Activated CD8-positive, alpha-beta T cell treated with anti-CD3 and anti-CD28 coated beads for 36 hours (primary cell): ENCODE measurements at regions of chr19 and their contacts with region 1.

Region 1: GRCh38 chr19:55258828-55259539 is at the start of gene PPP6R1:
- DNase-seq: peak; percentile 96
- ATAC-seq: peak; percentile 79
- H3K4me3 Mint-ChIP-seq: peak within 1 kb of the TSS; percentile 96
- H3K27ac Mint-ChIP-seq: peak within 1 kb of the TSS; percentile 99
- H3K4me1 Mint-ChIP-seq: peaks cover 10% of the 10 kb centered on the region
- H3K27me3 Mint-ChIP-seq: no peaks in the 10 kb centered on the region
- CTCF ChIP-seq: no peak
- total RNA-seq, gene PPP6R1: 197 to 207 TPM

Region 2: DNA sequence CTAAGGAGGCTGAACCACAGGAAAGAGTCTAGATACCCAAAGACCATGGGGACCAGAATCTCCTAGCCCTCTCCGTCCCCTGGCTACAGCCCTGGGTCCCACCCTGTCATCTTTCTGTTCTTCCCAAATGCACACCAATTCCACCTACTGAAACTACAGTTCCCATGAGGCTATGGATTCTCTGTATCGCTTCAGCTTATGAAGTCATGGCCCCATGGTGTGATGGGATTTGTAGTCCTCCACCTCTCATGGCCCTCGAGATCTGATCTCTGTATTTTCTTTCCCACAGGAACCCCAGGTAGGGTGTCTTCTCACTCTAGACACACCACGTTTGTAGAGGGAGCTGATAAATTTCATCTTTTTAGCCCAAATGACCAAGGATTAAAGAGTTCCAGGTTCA is 61.5 kb before region 1 on chr19:
- CTCF ChIA-PET with region 1: no interaction called
- POLR2A ChIA-PET with region 1: no interaction called
- intact Hi-C with region 1: no loop called
- DNase-seq: no peak
- ATAC-seq: peak; percentile 70
- H3K4me3 Mint-ChIP-seq: no peak overlapping the region
- H3K27ac Mint-ChIP-seq: no peak overlapping the region
- H3K4me1 Mint-ChIP-seq: no peaks in the 10 kb centered on the region
- H3K27me3 Mint-ChIP-seq: peaks cover 9% of the 10 kb centered on the region
- CTCF ChIP-seq: no peak

Region 3: GRCh38 chr19:55279770-55280643 is 21.0 kb after region 1 on chr19 and contains the start of gene HSPBP1:
- CTCF ChIA-PET with region 1: interaction called, 4 read pairs
- POLR2A ChIA-PET with region 1: interaction called, 54 read pairs
- intact Hi-C with region 1: no loop called
- DNase-seq: peak; percentile 98
- ATAC-seq: peak; percentile 95
- H3K4me3 Mint-ChIP-seq: peak within 1 kb of the TSS; percentile 92
- H3K27ac Mint-ChIP-seq: peak within 1 kb of the TSS; percentile 97
- H3K4me1 Mint-ChIP-seq: peaks cover 29% of the 10 kb centered on the region
- H3K27me3 Mint-ChIP-seq: no peaks in the 10 kb centered on the region
- CTCF ChIP-seq: no peak
- total RNA-seq, gene HSPBP1: 46.4 to 47.1 TPM

Region 4: DNA sequence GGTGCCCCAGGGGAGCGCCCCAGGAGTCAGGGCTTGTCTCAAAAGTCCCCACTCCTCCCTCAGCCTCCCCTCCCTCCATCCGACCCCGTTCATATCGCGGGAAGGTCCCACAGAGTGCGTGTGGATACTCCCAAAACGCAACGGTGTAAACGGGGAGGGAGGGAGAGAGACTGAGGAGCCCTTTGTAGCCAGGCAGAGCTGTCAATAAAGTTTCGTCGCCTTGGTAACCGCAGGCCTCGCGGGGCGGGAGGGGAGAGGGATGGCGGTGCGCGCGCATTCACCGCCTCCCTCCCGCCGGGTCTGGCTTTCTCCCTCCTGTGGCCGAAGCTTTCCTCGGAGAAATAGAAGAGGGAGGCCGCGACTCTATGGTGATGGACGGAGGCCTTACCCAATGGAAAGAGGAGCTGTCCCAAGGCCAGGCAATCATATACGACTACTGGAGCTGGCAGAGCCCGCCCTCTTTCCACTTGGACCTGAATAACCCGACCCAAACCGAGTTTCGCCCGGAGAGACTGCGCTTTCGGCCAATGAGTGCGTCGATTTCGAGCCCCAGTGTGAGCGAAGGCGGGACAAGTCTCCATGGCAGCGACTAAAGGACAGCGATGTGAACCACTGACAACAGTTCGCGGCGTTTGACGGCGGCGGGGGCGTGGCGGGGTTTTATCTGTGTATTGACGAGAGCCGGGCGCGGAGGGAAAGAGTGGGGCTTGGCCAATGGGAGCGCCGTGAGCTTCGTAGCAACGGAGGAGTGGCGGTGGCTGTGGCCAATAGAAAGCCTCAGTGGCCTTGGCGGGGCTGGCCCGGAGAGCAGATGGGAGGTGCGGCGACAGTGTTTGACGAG is 80.3 kb after region 1 on chr19 and contains the start of gene KMT5C:
- CTCF ChIA-PET with region 1: interaction called, 5 read pairs
- POLR2A ChIA-PET with region 1: interaction called, 10 read pairs
- intact Hi-C with region 1: no loop called
- DNase-seq: peak; percentile 100
- ATAC-seq: peak; percentile 84
- H3K4me3 Mint-ChIP-seq: peak within 1 kb of the TSS; percentile 90
- H3K27ac Mint-ChIP-seq: peak within 1 kb of the TSS; percentile 98
- H3K4me1 Mint-ChIP-seq: peaks cover 12% of the 10 kb centered on the region
- H3K27me3 Mint-ChIP-seq: peaks cover 4% of the 10 kb centered on the region
- CTCF ChIP-seq: no peak
- total RNA-seq, gene KMT5C: 32.6 to 33.1 TPM

Region 5: DNA sequence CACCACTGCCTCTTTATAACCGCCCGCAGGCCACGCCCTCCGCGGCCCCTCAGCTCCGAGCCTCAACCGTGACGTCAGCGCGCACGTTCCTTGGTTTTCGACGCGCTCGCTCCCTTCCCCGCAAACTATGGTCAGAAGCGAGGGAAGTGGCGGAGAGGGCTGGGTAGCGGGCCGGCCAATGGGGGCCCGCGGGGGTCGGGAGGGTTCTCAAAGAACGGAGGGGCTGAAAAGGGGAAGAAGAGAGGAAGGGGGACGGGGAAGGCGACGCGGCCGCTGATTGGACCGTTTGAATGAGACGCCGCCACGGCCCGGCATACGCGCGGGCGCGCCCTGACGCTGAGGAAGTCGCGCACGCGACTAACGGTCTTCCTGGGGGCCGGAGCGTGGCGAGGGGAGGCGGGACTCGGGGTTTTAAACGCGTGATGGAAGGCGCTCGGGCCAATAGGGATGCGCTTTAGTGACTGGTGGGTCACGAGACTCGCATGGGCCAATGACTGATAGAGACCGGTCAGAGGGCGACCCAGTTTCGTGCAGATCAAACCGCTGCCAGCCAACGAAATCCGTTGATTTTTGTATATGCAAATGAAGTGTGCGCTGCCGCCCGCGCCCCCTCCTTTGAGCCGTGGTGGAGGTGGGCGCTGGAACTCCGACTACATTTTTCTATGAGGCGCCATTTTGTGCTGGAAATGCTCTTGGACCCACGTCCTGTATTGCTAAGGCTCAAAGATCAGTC is 149.0 kb after region 1 on chr19:
- CTCF ChIA-PET with region 1: no interaction called
- POLR2A ChIA-PET with region 1: interaction called, 10 read pairs
- intact Hi-C with region 1: no loop called
- DNase-seq: peak; percentile 98
- ATAC-seq: peak; percentile 94
- H3K4me3 Mint-ChIP-seq: peak overlapping the region; percentile 92
- H3K27ac Mint-ChIP-seq: peak overlapping the region; percentile 97
- H3K4me1 Mint-ChIP-seq: peaks cover 26% of the 10 kb centered on the region
- H3K27me3 Mint-ChIP-seq: no peaks in the 10 kb centered on the region
- CTCF ChIP-seq: no peak